Calu3 (cell line): ENCODE measurements at regions of chr1 and their contacts with region 1.

Region 1: GRCh38 chr1:151729157-151729965 is 8.0 kb downstream of the RIIAD1 start:
- DNase-seq: peak; percentile 25
- H3K4me3 Mint-ChIP-seq: peak overlapping the region; percentile 12
- H3K27ac Mint-ChIP-seq: peak overlapping the region; percentile 63
- H3K4me1 Mint-ChIP-seq: peaks cover 36% of the 10 kb centered on the region
- H3K27me3 Mint-ChIP-seq: no peaks in the 10 kb centered on the region
- CTCF ChIP-seq: no peak

Region 2: DNA sequence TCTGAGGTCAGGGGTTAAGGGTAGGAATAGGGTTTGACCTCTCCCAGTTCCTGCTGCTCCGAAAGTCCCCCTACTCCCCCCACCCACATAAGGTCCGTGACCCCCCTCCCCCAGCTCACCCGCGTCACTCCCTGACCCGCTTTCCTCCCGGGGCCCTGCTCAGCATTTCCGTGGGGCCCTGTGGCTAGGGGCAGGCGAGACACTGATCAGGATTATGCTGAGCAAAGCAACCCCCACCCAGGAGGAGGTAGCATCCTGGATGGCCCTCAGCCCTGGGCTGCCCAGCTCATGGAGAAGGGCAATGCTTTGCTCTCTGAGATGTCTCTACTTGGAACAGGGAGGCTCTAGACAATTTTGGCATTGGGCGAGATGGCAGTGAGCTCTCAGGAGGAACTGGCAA is 98.5 kb after region 1 on chr1:
- CTCF ChIA-PET with region 1: interaction called, 13 read pairs
- intact Hi-C with region 1: no loop called
- DNase-seq: no peak
- H3K4me3 Mint-ChIP-seq: no peak overlapping the region
- H3K27ac Mint-ChIP-seq: no peak overlapping the region
- H3K4me1 Mint-ChIP-seq: peaks cover 41% of the 10 kb centered on the region
- H3K27me3 Mint-ChIP-seq: peaks cover 28% of the 10 kb centered on the region
- CTCF ChIP-seq: no peak